ENCODE measurements at regions of chr16 and their contacts with region 1.

Region 1: DNA sequence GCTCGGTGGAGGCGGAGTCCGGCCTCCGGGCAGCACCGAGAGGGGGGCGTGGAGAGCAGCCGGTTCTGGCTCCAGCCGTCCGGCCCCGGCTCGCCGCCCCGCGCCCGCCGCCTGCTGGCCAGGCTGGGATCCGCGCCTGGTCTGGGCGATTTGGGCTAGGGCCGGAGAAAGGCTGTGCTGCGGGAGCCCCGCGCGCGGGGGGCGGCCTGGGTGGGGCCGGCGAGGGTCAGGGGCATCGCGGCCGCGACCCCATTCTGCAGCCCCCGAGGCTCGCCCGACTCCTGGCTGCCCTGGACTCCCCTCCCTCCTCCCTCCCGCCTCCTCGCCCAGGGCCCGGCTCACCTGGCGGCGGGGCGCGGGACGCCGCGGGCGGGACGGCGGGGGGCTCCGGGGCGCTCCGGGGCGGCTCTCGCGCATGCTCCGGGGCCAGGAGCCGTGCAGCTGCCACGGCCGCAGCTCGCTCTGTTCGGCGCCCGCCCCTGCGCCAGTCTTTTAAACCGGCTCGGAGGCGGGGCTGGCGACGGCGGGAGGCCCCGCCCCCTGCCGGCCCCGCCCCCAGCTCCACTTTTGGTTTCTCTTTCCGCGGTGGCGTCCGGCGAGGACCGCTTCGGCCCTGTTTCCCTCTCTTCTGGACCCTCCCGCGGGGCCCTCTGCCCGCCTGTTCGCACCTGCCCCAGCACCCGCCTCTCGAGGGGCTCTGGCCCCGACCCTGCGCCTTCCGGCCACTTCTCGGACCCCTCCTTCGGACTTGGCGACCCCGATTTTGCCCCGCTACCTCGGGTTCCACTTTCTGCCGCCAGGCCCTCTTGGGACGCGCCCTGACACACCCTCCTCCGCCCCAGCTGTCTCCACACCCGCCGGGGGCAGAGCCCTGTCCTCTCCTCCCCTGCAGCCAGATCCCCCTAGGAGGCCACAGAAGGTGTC is at the start of gene SOCS1:
- DNase-seq: peak; percentile 82
- ATAC-seq: peak; percentile 67
- H3K4me3 ChIP-seq: peak within 1 kb of the TSS; percentile 82
- H3K27ac ChIP-seq: peak within 1 kb of the TSS; percentile 75
- H3K4me1 ChIP-seq: peaks cover 21% of the 10 kb centered on the region
- H3K27me3 ChIP-seq: no peaks in the 10 kb centered on the region
- CTCF ChIP-seq: peak; percentile 62; the same call in 1 of the 2 replicates
- total RNA-seq, gene SOCS1: 12.5 and 15.5 TPM in 2 replicates

Region 2: DNA sequence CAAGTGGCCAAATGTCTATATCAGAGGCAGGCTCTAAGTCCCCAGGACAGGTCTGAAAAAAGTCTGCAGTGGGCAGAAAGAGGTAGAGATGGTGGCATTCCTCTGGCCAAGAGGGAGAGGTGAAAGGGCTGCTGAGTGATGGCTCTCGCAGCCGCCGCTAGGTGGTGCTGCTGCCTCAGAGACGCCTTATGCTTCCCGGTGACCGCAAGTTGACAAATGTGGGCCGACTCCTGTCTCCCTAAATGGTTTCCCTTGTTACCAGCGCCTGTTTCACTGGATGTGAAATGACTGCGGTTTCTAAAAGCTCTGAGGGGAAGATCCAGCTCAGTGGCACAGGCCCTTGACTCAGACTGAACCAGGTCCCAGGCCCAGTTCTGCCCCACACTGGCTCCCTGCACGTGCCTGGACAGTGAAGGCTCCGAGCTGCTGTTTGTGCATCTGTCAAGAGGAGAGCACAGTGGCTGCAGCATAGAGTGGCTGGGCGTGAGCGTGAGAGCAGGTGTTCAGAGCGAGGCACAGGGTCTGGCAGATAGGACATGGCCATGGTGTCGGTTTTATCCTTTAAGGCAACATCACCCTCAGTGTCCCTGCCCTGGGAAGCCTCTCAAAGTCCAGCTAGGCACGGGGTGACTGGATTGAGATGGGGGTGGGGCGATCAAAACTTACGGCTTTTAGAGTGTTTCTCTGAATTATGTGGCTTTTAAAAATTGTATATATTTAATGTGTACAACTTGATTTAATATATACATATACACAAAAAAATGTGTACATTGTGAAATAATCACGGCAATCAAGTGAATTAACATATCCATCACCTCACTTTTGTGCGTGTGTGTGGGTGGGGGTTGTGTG is 291.7 kb before region 1 on chr16:
- CTCF ChIA-PET with region 1: interaction called, 11 read pairs
- POLR2A ChIA-PET with region 1: interaction called, 5 read pairs
- intact Hi-C with region 1: no loop called
- DNase-seq: peak; percentile 75
- ATAC-seq: peak; percentile 94
- H3K4me3 ChIP-seq: no peak overlapping the region
- H3K27ac ChIP-seq: no peak overlapping the region
- H3K4me1 ChIP-seq: no peaks in the 10 kb centered on the region
- H3K27me3 ChIP-seq: no peaks in the 10 kb centered on the region
- CTCF ChIP-seq: peak; percentile 88

Region 3: GRCh38 chr16:10971560-10971961 is 284.4 kb before region 1 on chr16:
- CTCF ChIA-PET with region 1: interaction called, 25 read pairs
- POLR2A ChIA-PET with region 1: interaction called, 5 read pairs
- intact Hi-C with region 1: loop called (anchors 1 kb)
- DNase-seq: peak; percentile 80
- ATAC-seq: peak; percentile 53
- H3K4me3 ChIP-seq: no peak overlapping the region
- H3K27ac ChIP-seq: peak overlapping the region; percentile 23; the same call in 1 of the 2 replicates
- H3K4me1 ChIP-seq: peaks cover 7% of the 10 kb centered on the region
- H3K27me3 ChIP-seq: no peaks in the 10 kb centered on the region
- CTCF ChIP-seq: peak; percentile 73

Region 4: GRCh38 chr16:11133344-11133943 is 122.6 kb before region 1 on chr16:
- CTCF ChIA-PET with region 1: interaction called, 10 read pairs
- POLR2A ChIA-PET with region 1: interaction called, 6 read pairs
- intact Hi-C with region 1: loop called (anchors 10 kb)
- DNase-seq: peak; percentile 91
- ATAC-seq: peak; percentile 85
- H3K4me3 ChIP-seq: peak overlapping the region; percentile 38; the same call in 1 of the 2 replicates
- H3K27ac ChIP-seq: peak overlapping the region; percentile 92
- H3K4me1 ChIP-seq: peaks cover 57% of the 10 kb centered on the region
- H3K27me3 ChIP-seq: no peaks in the 10 kb centered on the region
- CTCF ChIP-seq: no peak

Region 5: DNA sequence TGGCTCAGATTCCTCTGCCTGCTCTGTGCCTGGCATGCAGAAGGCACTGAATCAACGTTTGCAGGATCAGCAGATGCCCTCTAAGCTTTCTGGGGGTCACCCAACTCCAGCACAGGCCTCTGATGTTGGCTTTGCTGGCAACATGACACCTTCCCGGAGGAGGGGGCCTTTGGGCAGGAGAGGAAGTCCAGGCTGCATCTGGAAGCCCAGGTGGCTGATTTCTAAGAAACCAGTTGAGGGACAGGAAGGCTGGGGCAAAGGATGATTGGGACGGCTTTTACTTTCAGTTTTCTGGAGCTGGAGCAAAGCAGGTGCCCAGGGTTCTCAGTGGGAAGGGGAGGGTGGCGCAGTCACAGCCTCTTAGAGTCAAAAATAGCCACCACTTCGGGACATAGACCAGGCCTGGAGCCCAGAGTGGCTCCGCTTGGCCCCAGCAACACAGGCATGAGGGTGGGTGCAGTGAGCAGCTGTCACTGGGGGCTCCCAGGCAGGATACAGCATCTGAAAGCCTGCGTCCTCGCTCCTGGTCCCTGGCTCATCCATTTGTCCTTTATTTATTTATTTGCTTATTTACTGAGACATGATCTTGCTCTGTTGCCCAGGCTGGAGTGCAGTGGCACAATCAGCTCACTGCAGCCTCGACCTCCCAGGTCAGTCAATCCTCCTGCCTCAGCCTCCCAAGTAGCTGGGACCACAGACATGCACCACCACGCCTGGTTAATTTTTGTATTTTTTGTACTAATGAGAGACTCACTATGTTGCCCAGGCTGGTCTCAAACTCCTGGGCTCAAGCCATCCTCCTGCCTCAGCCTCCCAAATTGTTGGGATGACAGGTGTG is 15.1 kb before region 1 on chr16:
- CTCF ChIA-PET with region 1: no interaction called
- POLR2A ChIA-PET with region 1: no interaction called
- intact Hi-C with region 1: no loop called
- DNase-seq: no peak
- ATAC-seq: no peak
- H3K4me3 ChIP-seq: no peak overlapping the region
- H3K27ac ChIP-seq: no peak overlapping the region
- H3K4me1 ChIP-seq: no peaks in the 10 kb centered on the region
- H3K27me3 ChIP-seq: no peaks in the 10 kb centered on the region
- CTCF ChIP-seq: no peak

Region 6: GRCh38 chr16:11346700-11347319 is 90.8 kb after region 1 on chr16:
- CTCF ChIA-PET with region 1: no interaction called
- POLR2A ChIA-PET with region 1: interaction called, 15 read pairs
- intact Hi-C with region 1: no loop called
- DNase-seq: no peak
- ATAC-seq: no peak
- H3K4me3 ChIP-seq: no peak overlapping the region; the same call in 1 of the 2 replicates
- H3K27ac ChIP-seq: peak overlapping the region; percentile 99
- H3K4me1 ChIP-seq: peaks cover 60% of the 10 kb centered on the region
- H3K27me3 ChIP-seq: no peaks in the 10 kb centered on the region
- CTCF ChIP-seq: no peak

Region 7: GRCh38 chr16:11356573-11357331 is 100.8 kb after region 1 on chr16:
- CTCF ChIA-PET with region 1: interaction called, 4 read pairs
- POLR2A ChIA-PET with region 1: interaction called, 5 read pairs
- intact Hi-C with region 1: loop called (anchors 5 kb)
- DNase-seq: no peak
- ATAC-seq: no peak
- H3K4me3 ChIP-seq: peak overlapping the region; percentile 13; the same call in 1 of the 2 replicates
- H3K27ac ChIP-seq: peak overlapping the region; percentile 96
- H3K4me1 ChIP-seq: peaks cover 41% of the 10 kb centered on the region
- H3K27me3 ChIP-seq: no peaks in the 10 kb centered on the region
- CTCF ChIP-seq: peak; percentile 64

Measured in PC-3 (cell line).